Activated CD4-positive, alpha-beta T cell treated with anti-CD3 and anti-CD28 coated beads, Interleukin-2, amount 10 ng/mL, durations not matched to agents 24 days and 14 days (primary cell): ENCODE measurements at regions of chr15 and their contacts with region 1.

Region 1: DNA sequence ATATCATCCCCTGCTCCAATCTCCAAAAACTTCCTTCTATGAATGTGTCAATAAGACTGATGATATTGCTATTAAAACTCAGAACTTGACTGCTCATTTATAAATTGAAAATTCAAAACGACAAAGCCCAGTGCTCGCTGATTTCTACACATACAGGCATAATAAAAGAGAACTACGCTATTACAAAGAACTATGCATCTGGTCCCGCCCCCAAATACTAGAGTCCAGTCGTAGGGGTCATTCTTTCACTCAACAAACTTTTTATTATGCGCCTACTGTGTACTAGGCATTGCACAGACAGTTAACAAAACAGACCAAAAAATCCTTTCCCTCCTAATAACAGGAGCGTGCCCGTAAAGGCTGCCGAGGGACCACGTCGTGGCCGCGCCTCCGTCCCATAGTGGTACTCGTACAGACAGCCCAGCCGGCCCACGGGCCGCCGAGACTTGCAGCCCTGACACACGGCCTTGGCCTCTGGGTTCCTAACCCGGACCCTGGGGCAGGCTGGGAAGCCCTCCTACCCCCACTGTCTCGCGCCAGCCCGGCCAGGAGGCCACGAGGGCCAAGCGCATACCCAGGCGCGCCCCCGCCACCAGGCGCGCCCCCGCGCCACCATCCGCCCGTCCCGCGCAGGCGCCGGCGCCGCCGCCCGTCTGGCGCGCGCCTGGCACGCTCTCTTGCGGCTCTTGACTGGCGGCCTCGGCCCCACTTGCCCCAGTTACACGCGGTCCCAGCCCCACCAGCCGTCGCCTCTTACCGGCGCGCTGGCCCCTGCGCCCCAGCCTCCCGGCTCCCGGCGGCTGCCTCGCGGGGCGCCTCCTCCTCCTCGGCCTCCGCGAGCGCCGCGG is 757 bp downstream of the AVEN start:
- DNase-seq: peak; percentile 90
- H3K4me3 Mint-ChIP-seq: peak overlapping the region; percentile 88
- H3K27ac Mint-ChIP-seq: peak overlapping the region; percentile 94
- H3K4me1 Mint-ChIP-seq: peaks cover 23% of the 10 kb centered on the region
- H3K27me3 Mint-ChIP-seq: no peaks in the 10 kb centered on the region

Region 2: DNA sequence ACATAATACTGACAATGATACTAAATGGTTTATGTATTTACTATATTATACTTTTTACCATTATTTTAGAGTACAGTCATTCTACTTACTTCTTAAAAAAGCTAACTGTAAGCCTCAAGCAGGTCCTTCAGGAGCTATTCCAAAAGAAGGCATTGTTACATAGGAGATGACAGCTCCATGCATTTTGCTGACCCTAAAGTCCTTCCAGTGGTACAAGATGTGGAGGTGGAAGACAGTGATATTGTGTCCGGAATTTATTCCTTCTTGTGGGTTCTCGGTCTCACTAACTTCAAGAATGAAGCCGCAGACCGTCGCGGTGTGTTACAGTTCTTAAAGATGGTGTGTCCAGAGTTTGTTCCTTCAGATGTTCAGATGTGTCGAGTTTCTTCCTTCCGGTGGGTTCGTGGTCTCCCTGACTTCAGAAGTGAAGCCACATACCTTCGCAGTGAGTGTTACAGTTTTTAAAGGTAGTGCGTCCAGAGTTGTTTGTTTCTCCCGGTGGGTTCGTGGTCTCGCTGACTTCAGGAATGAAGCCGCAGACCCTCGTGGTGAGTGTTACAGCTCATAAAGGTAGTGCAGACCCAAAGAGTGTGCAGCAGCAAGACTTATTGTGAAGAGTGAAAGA is 20.1 kb before region 1 on chr15:
- intact Hi-C with region 1: loop called (anchors 2 kb)
- DNase-seq: peak; percentile 87
- H3K4me3 Mint-ChIP-seq: peak overlapping the region; percentile 61
- H3K27ac Mint-ChIP-seq: peak overlapping the region; percentile 14
- H3K4me1 Mint-ChIP-seq: peaks cover 13% of the 10 kb centered on the region
- H3K27me3 Mint-ChIP-seq: no peaks in the 10 kb centered on the region

Region 3: DNA sequence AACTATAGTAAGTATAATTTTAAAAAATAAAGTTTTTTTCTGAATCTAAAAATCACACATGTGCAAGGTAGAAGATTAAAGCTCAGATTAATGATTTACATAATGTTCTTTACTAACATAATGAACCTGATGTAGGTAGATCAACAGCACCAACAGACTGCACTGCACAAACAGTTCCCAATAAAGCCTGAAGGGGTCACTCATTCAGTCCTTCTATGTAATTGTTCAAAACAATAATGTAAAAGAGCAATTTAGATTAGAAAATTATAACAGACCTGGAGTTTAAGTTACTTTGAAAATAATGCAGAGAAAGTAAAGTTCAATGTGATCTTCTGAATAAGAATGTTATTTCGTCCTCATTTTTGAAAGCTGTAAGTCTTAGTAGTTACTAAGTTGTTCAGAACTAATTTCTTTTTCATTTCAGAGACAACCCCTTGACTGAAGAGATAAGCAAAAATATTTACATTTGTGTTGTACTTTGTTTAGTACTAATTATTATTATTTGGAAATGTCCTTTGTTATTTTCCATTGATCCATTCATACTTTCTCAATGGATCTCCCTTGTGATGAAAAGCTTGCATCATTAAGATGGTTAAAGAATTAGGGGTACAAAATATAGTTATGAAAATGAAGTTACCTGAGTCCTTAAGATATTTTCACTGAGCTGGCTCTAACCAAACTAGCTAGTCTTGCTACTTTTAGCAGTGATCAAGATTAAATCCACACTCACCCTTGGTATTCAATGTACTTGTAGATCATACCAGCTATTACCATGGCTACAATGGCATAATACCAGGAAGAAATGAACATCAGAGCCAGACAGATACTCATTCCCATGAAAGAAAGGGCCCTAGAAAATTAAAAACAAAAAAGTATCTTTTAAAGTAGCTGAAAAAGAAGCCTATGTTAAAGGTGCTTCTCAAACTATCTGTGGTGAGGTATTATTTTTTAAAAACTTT is 203.4 kb after region 1 on chr15:
- intact Hi-C with region 1: no loop called
- DNase-seq: peak; percentile 80
- H3K4me3 Mint-ChIP-seq: no peak overlapping the region
- H3K27ac Mint-ChIP-seq: no peak overlapping the region
- H3K4me1 Mint-ChIP-seq: peaks cover 21% of the 10 kb centered on the region
- H3K27me3 Mint-ChIP-seq: no peaks in the 10 kb centered on the region

Region 4: DNA sequence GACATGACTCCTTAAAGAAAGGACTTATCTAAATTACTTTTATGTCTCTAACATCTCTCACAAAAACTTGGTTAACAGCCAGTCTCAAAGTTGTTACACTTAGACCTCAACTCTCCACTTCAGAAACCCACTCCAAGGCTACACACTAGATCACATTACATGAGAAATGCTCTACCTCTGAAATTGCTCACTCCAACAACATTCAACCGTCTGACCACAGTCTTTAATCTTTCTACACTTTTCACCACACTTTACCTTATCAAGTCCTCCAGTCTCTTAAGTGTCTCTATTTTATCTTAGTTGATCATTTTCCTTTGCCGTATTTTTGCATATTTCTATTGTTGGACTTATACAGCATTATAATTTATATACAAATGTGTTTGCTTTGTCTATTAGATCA is 293.6 kb after region 1 on chr15:
- intact Hi-C with region 1: loop called (anchors 5 kb)
- DNase-seq: peak; percentile 67
- H3K4me3 Mint-ChIP-seq: peak overlapping the region; percentile 59
- H3K27ac Mint-ChIP-seq: peak overlapping the region; percentile 85
- H3K4me1 Mint-ChIP-seq: peaks cover 60% of the 10 kb centered on the region
- H3K27me3 Mint-ChIP-seq: no peaks in the 10 kb centered on the region

Region 5: DNA sequence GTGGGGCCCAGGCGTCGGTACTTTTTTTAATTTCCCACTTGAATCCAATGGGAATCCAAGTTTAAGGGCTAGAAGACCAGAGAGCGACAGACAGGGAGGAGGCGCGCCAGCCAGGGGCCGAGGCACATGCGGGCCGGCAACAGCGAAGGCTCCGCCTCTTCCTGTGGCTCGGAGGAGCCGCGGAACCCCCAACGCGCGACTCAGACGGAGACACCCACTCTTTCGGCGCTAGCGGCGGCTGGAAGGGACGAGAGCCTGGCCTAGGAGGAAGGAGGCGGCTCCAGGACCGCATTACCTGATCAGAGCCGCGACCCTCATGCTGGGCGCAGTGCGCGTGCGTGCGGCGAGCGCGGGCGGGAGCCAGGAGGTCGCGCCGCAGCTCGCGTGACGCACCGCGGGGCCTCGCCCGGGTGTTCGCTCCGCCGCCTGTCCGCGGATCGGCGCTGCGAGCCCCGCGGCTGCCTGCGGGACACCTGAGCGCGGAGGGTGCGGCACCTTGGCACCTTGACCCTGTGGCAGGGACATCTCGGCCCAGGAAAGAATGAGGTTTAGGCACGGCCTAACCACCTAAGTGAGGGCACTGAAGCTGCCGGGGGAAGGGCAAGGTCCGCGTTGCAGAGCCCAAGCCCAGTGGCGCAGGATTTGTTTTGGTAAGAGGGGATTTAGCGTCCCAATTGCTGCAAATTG is 1507.7 kb after region 1 on chr15 and contains the start of gene DPH6:
- intact Hi-C with region 1: loop called (anchors 5 kb)
- DNase-seq: peak; percentile 94
- H3K4me3 Mint-ChIP-seq: peak within 1 kb of the TSS; percentile 97
- H3K27ac Mint-ChIP-seq: peak within 1 kb of the TSS; percentile 99
- H3K4me1 Mint-ChIP-seq: peaks cover 13% of the 10 kb centered on the region
- H3K27me3 Mint-ChIP-seq: no peaks in the 10 kb centered on the region
- total RNA-seq, gene DPH6: 13.2 and 15.2 TPM in 2 replicates